Transverse colon (tissue), 4 donors: ENCODE measurements at regions of chr10 and their contacts with region 1.

Region 1: GRCh38 chr10:79195091-79195923 is 126.5 kb downstream of the ZMIZ1 start:
- DNase-seq: peak; percentile 87
- H3K4me3 ChIP-seq: no peak overlapping the region
- H3K27ac ChIP-seq: peak overlapping the region; percentile 55 to 80 (median 73)
- H3K4me1 ChIP-seq: peaks cover 6 to 18% (median 11%) of the 10 kb centered on the region in 4 donors
- H3K27me3 ChIP-seq: no peaks in the 10 kb centered on the region
- CTCF ChIP-seq: peak; percentile 93 to 97 (median 96)
- EP300 ChIP-seq: no peak
- POLR2A ChIP-seq: no peak

Region 2: GRCh38 chr10:78041170-78042057 is 1153.9 kb before region 1 on chr10:
- in situ Hi-C with region 1: loop called (anchors 5 to 25 kb)
- intact Hi-C with region 1: loop called (anchors 2 kb)
- DNase-seq: no peak
- H3K4me3 ChIP-seq: no peak overlapping the region
- H3K27ac ChIP-seq: no peak overlapping the region
- H3K4me1 ChIP-seq: peaks cover 0 to 18% (median 5%) of the 10 kb centered on the region in 4 donors
- H3K27me3 ChIP-seq: no peaks in the 10 kb centered on the region
- CTCF ChIP-seq: no peak
- EP300 ChIP-seq: no peak
- POLR2A ChIP-seq: no peak

Region 3: GRCh38 chr10:78302989-78303854 is 892.1 kb before region 1 on chr10:
- in situ Hi-C with region 1: loop called in 1 of 4 experiments (anchors 10 kb)
- intact Hi-C with region 1: loop called (anchors 10 kb)
- DNase-seq: peak; percentile 96
- H3K4me3 ChIP-seq: peak overlapping the region; percentile 45 to 73 (median 59)
- H3K27ac ChIP-seq: peak overlapping the region; percentile 89 to 93 (median 90)
- H3K4me1 ChIP-seq: peaks cover 6 to 16% (median 10%) of the 10 kb centered on the region in 4 donors
- H3K27me3 ChIP-seq: no peaks in the 10 kb centered on the region
- CTCF ChIP-seq: peak; percentile 67 to 93 (median 73)
- EP300 ChIP-seq: peak; percentile 6
- POLR2A ChIP-seq: peak; percentile 92

Region 4: DNA sequence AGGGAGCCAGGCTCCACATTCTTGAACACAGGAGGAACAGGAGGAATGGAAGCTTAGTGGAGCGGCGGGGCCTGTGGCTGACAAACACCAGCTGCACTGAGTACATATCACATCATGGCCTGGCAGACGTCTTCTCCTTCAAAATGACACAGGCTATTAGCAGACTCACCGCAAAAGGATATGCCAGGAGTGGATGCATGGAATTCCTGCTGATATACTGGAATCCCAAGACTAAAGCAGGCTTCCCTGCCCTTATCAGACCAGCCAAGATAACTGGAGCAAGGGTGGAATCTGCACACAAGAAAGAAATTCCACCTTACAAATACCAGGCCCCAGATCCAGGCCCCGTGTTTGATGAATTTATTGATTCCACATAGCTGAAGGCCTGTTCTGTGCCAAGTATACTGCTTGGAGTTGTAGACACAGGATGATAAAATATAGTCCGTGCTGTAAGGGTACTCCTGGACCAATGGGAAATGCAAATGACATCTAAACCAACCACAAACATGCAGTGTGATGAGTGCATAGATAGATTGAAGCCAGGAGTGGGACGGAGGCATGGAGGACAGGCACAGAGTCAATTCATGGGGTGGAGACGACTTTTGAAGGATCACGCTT is 607.0 kb before region 1 on chr10:
- in situ Hi-C with region 1: no loop called
- intact Hi-C with region 1: no loop called
- DNase-seq: peak; percentile 32
- H3K4me3 ChIP-seq: no peak overlapping the region
- H3K27ac ChIP-seq: peak overlapping the region; percentile 40 to 66 (median 61)
- H3K4me1 ChIP-seq: peaks cover 24 to 48% (median 31%) of the 10 kb centered on the region in 4 donors
- H3K27me3 ChIP-seq: no peaks in the 10 kb centered on the region
- CTCF ChIP-seq: no peak
- EP300 ChIP-seq: no peak
- POLR2A ChIP-seq: no peak

Region 5: GRCh38 chr10:78852466-78853240 is 342.7 kb before region 1 on chr10:
- in situ Hi-C with region 1: loop called in 2 of 4 experiments (anchors 10 kb)
- intact Hi-C with region 1: no loop called
- DNase-seq: peak; percentile 45
- H3K4me3 ChIP-seq: no peak overlapping the region
- H3K27ac ChIP-seq: no peak overlapping the region
- H3K4me1 ChIP-seq: no peaks in the 10 kb centered on the region
- H3K27me3 ChIP-seq: no peaks in the 10 kb centered on the region
- CTCF ChIP-seq: peak; percentile 13 to 56 (median 42)
- EP300 ChIP-seq: no peak
- POLR2A ChIP-seq: no peak

Region 6: DNA sequence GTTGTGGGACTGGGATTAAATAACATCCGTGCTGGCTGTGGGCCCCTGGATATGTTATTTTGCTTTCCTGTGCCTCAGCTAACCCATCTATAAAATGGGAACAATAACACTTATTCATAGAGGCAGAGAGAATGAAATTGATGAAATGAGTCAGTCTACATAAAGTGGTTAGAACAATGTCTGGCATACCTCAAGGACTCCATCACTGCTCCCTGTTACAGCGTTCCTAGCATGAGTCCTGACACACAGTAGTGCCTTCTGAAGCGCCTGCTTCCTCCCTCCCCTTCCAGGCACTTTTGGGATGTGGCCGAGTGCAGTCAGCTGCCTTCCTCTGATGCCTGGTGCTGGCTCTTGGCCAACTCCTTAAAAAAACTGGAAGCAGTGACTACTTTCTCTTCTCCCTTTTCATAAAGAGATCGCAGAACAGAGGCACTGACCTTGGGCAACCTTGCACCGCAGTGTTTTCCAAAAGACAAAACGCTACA is 234.9 kb before region 1 on chr10:
- in situ Hi-C with region 1: no loop called
- intact Hi-C with region 1: loop called (anchors 10 kb)
- DNase-seq: peak; percentile 66
- H3K4me3 ChIP-seq: no peak overlapping the region
- H3K27ac ChIP-seq: peak overlapping the region; percentile 25 to 66 (median 44)
- H3K4me1 ChIP-seq: peaks cover 6 to 12% (median 9%) of the 10 kb centered on the region in 4 donors
- H3K27me3 ChIP-seq: no peaks in the 10 kb centered on the region
- CTCF ChIP-seq: no peak
- EP300 ChIP-seq: no peak
- POLR2A ChIP-seq: no peak

Region 7: DNA sequence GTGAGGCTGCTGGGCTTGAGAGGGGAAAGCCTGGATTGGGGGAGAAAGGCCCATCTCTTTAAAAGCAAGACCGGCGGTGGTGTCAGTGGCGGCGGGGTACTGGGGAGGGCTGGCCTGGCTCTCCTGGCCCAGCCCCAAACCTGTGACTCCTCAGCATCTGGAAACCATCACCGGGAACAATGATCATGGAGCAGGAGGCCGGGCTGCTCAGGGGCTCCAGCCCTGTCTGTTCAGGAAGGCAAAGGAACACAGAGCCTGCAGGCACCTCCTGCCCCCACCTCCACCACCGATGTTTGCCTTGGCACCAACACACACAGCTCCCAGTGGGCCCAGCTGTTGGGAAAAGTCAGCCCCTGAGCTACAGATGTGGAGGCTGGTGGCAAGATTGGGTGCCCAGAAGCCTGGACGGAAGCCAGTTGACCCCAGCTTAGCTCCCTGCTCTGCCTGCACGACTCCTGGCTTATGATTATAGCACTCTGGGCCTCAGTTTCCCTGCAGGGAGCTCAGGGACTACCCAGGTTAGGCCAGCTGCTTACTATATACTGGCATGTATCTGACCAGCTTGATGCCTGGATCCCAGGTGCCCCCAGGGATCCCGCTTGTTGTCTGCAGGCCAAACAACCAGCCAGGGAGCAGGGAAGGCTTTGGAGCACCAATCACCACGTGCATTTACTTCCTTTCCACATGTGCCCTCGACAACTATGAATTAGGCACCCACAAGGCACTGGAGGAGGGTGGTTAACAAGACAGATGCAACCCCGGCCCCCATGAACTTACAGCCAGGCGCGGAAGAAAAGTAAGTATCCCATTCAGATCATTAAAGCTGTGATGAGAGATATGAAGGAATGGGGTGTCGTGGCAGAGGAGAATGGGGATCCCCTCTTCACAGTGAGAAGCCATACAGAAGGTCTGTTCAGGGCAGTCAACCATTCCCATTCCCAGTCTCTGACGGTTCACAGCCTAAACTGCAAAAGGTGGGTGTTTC is 212.8 kb after region 1 on chr10:
- in situ Hi-C with region 1: no loop called
- intact Hi-C with region 1: no loop called
- DNase-seq: peak; percentile 51
- H3K4me3 ChIP-seq: no peak overlapping the region
- H3K27ac ChIP-seq: no peak overlapping the region
- H3K4me1 ChIP-seq: peaks cover 56 to 76% (median 69%) of the 10 kb centered on the region in 4 donors
- H3K27me3 ChIP-seq: no peaks in the 10 kb centered on the region
- CTCF ChIP-seq: no peak
- EP300 ChIP-seq: no peak
- POLR2A ChIP-seq: no peak

Region 8: DNA sequence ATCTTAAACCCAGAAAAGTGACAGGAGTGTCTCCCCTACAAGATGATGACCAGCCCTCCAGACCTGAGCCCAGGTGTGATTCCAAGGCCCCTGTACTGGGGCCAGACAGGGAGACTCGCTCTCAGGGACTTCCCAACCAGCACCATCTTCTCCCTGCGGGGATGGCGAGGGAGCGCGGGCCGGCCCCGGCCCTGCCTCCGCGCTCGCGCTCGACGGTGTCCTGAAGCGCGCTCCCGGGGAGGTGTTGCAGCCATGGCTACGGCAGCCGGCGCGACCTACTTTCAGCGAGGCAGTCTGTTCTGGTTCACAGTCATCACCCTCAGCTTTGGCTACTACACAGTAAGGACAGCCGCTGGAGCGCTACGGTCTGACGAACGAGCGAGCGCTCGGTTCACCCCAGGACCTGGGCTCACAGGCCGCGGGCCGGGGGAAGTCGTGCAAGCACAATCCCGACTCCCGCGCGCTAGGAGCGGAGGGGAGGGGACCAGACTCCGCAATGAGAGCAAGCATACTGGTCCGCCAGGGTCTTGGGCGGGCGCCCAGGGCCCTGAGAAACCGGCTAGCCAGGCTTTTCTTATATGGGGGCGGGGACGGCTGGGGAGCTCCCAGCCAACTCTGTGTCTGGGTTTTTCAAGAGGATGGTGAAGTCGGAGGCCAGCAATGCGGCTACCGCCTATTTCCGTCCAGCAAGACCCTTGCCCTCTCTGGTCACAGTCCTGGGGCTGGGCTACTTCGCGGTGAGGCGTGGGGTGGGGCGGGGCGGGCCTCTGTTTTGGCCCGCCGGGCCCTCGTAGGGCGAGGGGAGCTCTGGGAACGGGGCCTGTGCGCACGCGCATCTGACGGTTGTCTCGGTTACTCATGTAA is 883.4 kb after region 1 on chr10 and contains the start of gene TMEM254:
- in situ Hi-C with region 1: no loop called
- intact Hi-C with region 1: no loop called
- DNase-seq: peak; percentile 94
- H3K4me3 ChIP-seq: peak within 1 kb of the TSS; percentile 47 to 91 (median 76)
- H3K27ac ChIP-seq: peak within 1 kb of the TSS; percentile 92 to 97 (median 94)
- H3K4me1 ChIP-seq: peaks cover 3 to 19% (median 14%) of the 10 kb centered on the region in 4 donors
- H3K27me3 ChIP-seq: no peaks in the 10 kb centered on the region
- CTCF ChIP-seq: no peak
- EP300 ChIP-seq: no peak
- POLR2A ChIP-seq: peak; percentile 73
- total RNA-seq, gene TMEM254: 3.0 to 33.7 (median 10.4) TPM

Region 9: GRCh38 chr10:80356563-80356988 is 1161.3 kb after region 1 on chr10 and contains the starts of genes DYDC1 and DYDC2:
- in situ Hi-C with region 1: no loop called
- intact Hi-C with region 1: no loop called
- DNase-seq: peak; percentile 25
- H3K4me3 ChIP-seq: peak within 1 kb of the TSS in 3 of 4 donors; percentile 11 to 39 (median 17)
- H3K27ac ChIP-seq: no peak within 1 kb of the TSS
- H3K4me1 ChIP-seq: peaks cover 5 to 14% (median 12%) of the 10 kb centered on the region in 4 donors
- H3K27me3 ChIP-seq: peaks cover 38% of the 10 kb centered on the region
- CTCF ChIP-seq: no peak
- EP300 ChIP-seq: no peak
- POLR2A ChIP-seq: no peak
- total RNA-seq, gene DYDC1: not detected
- total RNA-seq, gene DYDC2: not detected